ENCODE measurements at regions of chr5 and their contacts with region 1.

Region 1: GRCh38 chr5:172770675-172771438 is at the start of gene DUSP1:
- DNase-seq: peak; percentile 98 to 99 (median 99)
- H3K4me3 ChIP-seq: peak within 1 kb of the TSS; percentile 95 to 99 (median 95)
- H3K4me3 Mint-ChIP-seq: peak within 1 kb of the TSS; percentile 94 to 100
- H3K27ac ChIP-seq: peak within 1 kb of the TSS; percentile 100
- H3K27ac Mint-ChIP-seq: peak within 1 kb of the TSS; percentile 99 to 100 (median 100)
- H3K4me1 ChIP-seq: peaks cover 60 to 63% of the 10 kb centered on the region in 2 donors
- H3K4me1 Mint-ChIP-seq: peaks cover 53% of the 10 kb centered on the region
- H3K27me3 ChIP-seq: no peaks in the 10 kb centered on the region
- H3K27me3 Mint-ChIP-seq: peaks cover 4 to 34% (median 12%) of the 10 kb centered on the region in 3 donors
- CTCF ChIP-seq: no peak
- polyA plus RNA-seq, gene DUSP1: 1,963 to 4,884 (median 3,954) TPM

Region 2: DNA sequence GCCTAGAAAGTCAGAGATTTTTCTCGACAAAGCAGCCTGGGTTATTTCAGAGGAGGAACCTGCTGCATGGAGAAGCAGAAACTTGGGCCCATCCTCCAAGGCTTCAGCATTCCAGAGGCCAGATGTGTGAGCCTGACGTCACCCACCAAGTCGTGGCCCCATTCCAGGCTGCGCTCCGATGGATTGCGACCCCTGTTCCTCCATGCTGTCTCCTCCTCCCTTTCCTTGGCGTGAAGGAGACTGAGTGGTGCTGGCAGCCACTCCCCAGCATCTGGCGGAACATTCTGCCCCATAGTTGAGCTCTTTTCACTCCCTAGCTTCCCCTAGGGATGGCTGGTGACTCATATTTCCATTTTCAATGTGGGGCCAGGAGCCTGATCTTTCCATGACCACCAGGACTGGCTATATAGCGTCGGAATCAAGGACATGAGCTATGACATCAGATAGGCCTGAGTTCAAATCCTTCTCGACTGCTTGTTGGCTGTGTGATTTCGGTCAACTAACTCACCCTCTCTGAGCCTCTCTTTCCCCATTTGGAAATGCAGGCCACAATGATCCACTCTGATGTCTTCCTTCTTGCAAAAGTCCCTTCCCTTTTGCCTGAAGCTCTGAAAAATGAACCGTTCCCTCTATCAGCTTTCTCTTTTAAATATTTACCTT is 24.6 kb after region 1 on chr5:
- intact Hi-C with region 1: loop called (anchors 2 kb)
- DNase-seq: peak in 1 of 3 donors; percentile 41
- H3K4me3 ChIP-seq: peak overlapping the region in 1 of 3 experiments; percentile 7
- H3K4me3 Mint-ChIP-seq: peak overlapping the region in 1 of 2 donors; percentile 7
- H3K27ac ChIP-seq: peak overlapping the region; percentile 43 to 95
- H3K27ac Mint-ChIP-seq: peak overlapping the region; percentile 83 to 100 (median 97)
- H3K4me1 ChIP-seq: peaks cover 71 to 83% of the 10 kb centered on the region in 2 donors
- H3K4me1 Mint-ChIP-seq: peaks cover 72% of the 10 kb centered on the region
- H3K27me3 ChIP-seq: no peaks in the 10 kb centered on the region
- H3K27me3 Mint-ChIP-seq: peaks cover 0 to 5% (median 2%) of the 10 kb centered on the region in 3 donors
- CTCF ChIP-seq: no peak

Region 3: GRCh38 chr5:172833686-172834414 is 63.0 kb after region 1 on chr5 and contains the start of gene ERGIC1:
- intact Hi-C with region 1: loop called (anchors 2 to 10 kb)
- DNase-seq: peak; percentile 70 to 78 (median 77)
- H3K4me3 ChIP-seq: peak within 1 kb of the TSS; percentile 69 to 84 (median 75)
- H3K4me3 Mint-ChIP-seq: peak within 1 kb of the TSS; percentile 85 to 91
- H3K27ac ChIP-seq: peak within 1 kb of the TSS; percentile 53 to 91
- H3K27ac Mint-ChIP-seq: peak within 1 kb of the TSS; percentile 86 to 96 (median 94)
- H3K4me1 ChIP-seq: peaks cover 51 to 74% of the 10 kb centered on the region in 2 donors
- H3K4me1 Mint-ChIP-seq: peaks cover 62% of the 10 kb centered on the region
- H3K27me3 ChIP-seq: no peaks in the 10 kb centered on the region
- H3K27me3 Mint-ChIP-seq: peaks cover 0 to 2% (median 1%) of the 10 kb centered on the region in 3 donors
- CTCF ChIP-seq: no peak
- polyA plus RNA-seq, gene ERGIC1: 28.3 to 76.2 (median 34.1) TPM

Region 4: DNA sequence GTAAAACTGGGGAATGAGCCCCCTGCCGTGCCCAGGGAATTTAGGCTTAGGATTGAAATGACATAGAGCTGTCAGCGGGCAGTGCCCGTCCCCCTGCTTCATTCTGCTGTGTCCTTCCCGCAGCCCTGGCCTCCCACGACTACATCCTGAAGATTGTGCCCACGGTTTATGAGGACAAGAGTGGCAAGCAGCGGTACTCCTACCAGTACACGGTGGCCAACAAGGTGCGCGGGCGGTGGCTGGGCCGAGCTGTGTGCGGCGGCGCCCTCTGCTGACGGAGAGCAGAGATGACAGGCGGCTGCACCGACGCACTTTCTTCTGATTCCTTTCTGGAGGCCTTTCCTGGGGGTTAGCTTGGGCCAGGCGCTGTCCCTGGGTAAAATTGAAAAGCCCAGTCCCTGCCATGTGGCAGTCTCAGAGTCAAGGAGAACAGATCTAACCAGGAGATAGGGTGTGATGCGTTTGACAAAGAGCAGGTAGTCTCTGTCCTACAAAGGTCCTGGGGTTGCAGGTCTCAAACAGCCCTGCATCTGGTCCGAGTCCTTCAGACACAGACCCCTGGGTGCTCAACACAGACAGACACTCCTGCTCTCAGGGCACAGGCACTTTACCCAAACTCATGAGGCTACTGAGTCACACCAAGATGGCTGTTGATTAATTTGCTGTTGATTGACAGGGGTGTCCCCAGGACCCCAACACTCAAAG is 161.6 kb after region 1 on chr5:
- intact Hi-C with region 1: loop called (anchors 5 kb)
- DNase-seq: peak; percentile 61 to 73 (median 66)
- H3K4me3 ChIP-seq: no peak overlapping the region
- H3K4me3 Mint-ChIP-seq: no peak overlapping the region
- H3K27ac ChIP-seq: no peak overlapping the region
- H3K27ac Mint-ChIP-seq: peak overlapping the region in 4 of 7 donors; percentile 15 to 82 (median 54)
- H3K4me1 ChIP-seq: no peaks in the 10 kb centered on the region
- H3K4me1 Mint-ChIP-seq: peaks cover 13% of the 10 kb centered on the region
- H3K27me3 ChIP-seq: no peaks in the 10 kb centered on the region
- H3K27me3 Mint-ChIP-seq: peaks cover 0 to 2% (median 1%) of the 10 kb centered on the region in 3 donors
- CTCF ChIP-seq: peak; percentile 97